ENCODE measurements at regions of chr2 and their contacts with region 1.

Region 1: DNA sequence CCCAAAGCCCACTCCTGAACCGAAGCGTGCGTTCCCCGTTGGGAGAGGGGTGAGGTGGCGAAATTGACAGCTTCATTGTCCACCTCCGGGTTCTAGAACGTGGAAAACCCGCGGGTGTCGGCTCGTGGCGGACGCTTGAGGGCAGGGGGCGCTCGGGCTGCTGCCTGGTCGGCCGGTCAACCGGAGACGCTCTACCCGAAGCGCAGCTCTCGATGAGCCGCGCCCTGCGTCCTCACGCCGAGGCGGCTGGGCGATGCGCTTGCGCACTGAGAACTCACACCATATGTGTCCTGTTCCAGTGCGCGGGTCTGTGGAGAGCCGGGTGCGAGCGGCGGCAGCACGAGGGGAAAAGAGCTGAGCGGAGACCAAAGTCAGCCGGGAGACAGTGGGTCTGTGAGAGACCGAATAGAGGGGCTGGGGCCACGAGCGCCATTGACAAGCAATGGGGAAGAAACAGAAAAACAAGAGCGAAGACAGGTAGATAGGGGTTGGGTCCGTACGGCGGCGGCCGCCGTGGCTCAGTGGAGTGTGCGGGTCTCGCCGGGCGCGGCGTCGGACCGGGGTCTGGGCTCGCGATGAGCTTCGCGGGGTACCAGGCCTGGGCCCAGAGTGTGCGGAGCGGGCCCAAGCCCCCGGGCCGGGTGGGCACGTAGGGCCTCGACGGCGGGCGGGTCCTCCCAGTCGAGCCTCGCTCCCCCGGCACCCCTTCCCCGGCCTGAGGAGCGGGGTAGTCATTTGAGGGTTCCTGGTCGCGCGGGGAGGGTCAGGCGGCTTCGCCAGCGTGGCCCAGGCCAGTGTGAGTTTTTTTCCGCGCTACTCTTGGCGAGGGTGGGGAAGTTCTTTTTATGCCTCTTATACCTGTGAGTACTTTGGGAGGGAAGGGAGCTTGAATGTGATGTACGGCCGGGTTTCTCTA is at the start of gene EIF5B:
- DNase-seq: peak; percentile 98 to 99
- H3K4me3 ChIP-seq: peak within 1 kb of the TSS; percentile 72 to 95 (median 83)
- H3K27ac ChIP-seq: peak within 1 kb of the TSS; percentile 89 to 95 (median 93)
- H3K4me1 ChIP-seq: peaks cover 11 to 61% (median 45%) of the 10 kb centered on the region in 4 donors
- H3K27me3 ChIP-seq: no peaks in the 10 kb centered on the region
- CTCF ChIP-seq: peak in 4 of 7 experiments; percentile 22 to 56 (median 48)
- EP300 ChIP-seq: no peak
- POLR2A ChIP-seq: peak in 1 of 4 donors; percentile 41
- total RNA-seq, gene EIF5B: 22.3 to 518 (median 51.2) TPM

Region 2: GRCh38 chr2:99180755-99181623 is 156.4 kb before region 1 on chr2 and contains the starts of genes MITD1 and MRPL30:
- intact Hi-C with region 1: loop called (anchors 10 kb)
- DNase-seq: peak; percentile 92 to 98
- H3K4me3 ChIP-seq: peak within 1 kb of the TSS; percentile 63 to 89 (median 77)
- H3K27ac ChIP-seq: peak within 1 kb of the TSS; percentile 73 to 86 (median 84)
- H3K4me1 ChIP-seq: peaks cover 29 to 63% (median 50%) of the 10 kb centered on the region in 4 donors
- H3K27me3 ChIP-seq: no peaks in the 10 kb centered on the region
- CTCF ChIP-seq: peak in 1 of 7 experiments; percentile 15
- EP300 ChIP-seq: no peak
- POLR2A ChIP-seq: peak in 1 of 4 donors; percentile 52
- total RNA-seq, gene MITD1: 2.0 to 132 (median 37.9) TPM
- total RNA-seq, gene MRPL30: 1.4 to 97.4 (median 38.4) TPM

Region 3: GRCh38 chr2:99389371-99389770 is 52.0 kb after region 1 on chr2:
- intact Hi-C with region 1: no loop called
- DNase-seq: no peak
- H3K4me3 ChIP-seq: no peak overlapping the region
- H3K27ac ChIP-seq: no peak overlapping the region
- H3K4me1 ChIP-seq: peaks cover 0 to 4% (median 0%) of the 10 kb centered on the region in 4 donors
- H3K27me3 ChIP-seq: no peaks in the 10 kb centered on the region
- CTCF ChIP-seq: no peak
- EP300 ChIP-seq: no peak
- POLR2A ChIP-seq: no peak

Region 4: DNA sequence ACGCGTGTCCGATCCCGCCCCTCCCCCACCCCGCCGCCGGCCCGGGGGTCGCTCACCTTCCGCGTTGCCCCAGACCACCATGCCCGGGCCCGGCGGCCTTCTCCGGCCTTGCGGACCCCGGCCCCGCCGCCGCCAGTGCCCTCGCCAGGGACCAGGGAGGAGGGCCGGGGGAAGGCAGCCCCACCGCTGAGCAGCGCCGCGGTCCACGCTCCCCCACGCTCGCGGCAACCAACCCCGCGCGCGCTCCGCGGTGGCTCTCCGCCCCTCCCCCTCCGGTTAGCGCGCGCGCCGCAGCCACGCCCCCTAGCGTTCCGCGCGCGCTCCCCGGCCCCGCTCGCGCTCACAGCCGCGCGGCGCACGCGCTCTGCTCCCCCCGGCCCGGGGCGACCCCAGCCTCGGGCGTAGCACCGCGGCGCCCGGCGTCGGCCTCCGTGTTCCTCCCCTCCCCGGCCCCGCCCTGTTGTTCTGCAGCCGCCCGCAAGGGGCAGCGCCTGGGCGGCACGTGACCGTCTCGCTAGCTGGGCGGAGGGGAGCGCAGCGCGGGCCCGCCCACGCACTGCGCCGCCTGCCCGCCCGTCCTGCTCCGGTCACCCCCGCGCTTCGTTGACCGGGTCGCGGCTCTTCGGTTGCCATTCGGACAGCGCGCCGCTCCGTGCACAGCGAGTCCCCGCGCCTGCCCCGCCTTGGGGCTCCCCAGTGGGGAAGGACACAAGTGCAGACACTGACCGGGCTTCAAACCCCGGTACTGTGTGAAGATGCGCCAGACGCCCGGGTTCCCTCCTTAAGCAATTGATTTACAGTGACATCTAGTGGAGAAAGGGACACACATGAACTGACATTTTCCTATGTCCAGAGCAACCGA is 152.6 kb after region 1 on chr2 and contains the start of gene REV1:
- intact Hi-C with region 1: loop called (anchors 5 kb)
- DNase-seq: peak; percentile 91 to 99
- H3K4me3 ChIP-seq: peak within 1 kb of the TSS; percentile 81 to 97 (median 94)
- H3K27ac ChIP-seq: peak within 1 kb of the TSS; percentile 92 to 100 (median 99)
- H3K4me1 ChIP-seq: peaks cover 14 to 42% (median 33%) of the 10 kb centered on the region in 4 donors
- H3K27me3 ChIP-seq: no peaks in the 10 kb centered on the region
- CTCF ChIP-seq: peak in 5 of 7 experiments; percentile 76 to 93 (median 87)
- EP300 ChIP-seq: no peak
- POLR2A ChIP-seq: no peak
- total RNA-seq, gene REV1: 11.7 to 122 (median 42.2) TPM

Region 5: DNA sequence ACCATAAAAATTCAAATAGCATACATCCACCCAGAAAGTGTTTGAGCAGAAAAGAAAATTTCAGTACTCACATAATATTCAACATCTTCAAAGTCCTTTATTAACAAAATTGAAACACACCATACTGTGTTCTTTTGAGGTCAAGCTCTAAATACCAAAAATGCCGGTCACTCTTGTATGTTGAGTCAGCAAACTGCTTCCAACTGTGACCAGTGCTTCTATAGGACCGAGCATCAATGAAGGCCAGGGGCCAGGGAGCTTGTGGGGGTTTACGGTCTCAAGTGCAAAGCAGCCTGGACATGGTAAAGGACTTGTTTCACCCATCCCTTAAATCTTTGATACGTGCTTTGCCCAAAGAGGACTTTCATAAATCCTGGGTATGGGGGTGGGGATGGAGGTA is 265.1 kb after region 1 on chr2:
- intact Hi-C with region 1: no loop called
- DNase-seq: no peak
- H3K4me3 ChIP-seq: no peak overlapping the region
- H3K27ac ChIP-seq: no peak overlapping the region
- H3K4me1 ChIP-seq: peaks cover 0 to 5% (median 0%) of the 10 kb centered on the region in 4 donors
- H3K27me3 ChIP-seq: no peaks in the 10 kb centered on the region
- CTCF ChIP-seq: no peak
- EP300 ChIP-seq: no peak
- POLR2A ChIP-seq: no peak

Region 6: GRCh38 chr2:99998651-99999320 is 661.4 kb after region 1 on chr2:
- intact Hi-C with region 1: no loop called
- DNase-seq: no peak
- H3K4me3 ChIP-seq: no peak overlapping the region
- H3K27ac ChIP-seq: no peak overlapping the region
- H3K4me1 ChIP-seq: peaks cover 0 to 12% (median 6%) of the 10 kb centered on the region in 4 donors
- H3K27me3 ChIP-seq: no peaks in the 10 kb centered on the region
- CTCF ChIP-seq: no peak
- EP300 ChIP-seq: no peak
- POLR2A ChIP-seq: no peak